AG04449 (cell line): ENCODE measurements at regions of chr15 and their contacts with region 1.

Region 1: DNA sequence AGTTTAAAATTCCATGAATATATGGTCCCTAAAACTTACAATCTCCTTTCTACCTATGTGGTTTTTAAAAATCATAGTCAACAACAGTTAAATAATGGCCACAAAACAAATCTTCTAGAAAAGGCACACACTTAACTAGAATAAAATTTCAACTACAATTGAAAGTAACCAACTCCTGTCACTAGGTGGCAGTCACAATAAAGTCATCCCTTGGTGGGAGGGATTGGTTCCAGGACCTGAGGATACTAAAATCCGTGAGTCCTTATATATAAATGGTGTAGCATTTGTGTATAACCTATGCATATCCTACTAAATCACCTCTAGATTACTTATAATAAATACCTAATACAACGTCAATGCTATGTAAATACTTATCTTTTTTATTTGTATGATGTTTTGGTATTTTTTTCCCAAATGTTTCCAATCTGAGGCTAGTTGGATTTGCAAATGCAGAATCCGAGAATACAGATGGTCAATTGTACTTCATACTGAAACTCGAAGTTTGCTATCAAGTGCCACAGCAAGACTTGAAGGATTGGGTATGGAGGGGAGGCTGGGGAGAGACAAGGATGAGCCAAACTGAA is 172.6 kb downstream of the FMN1 start:
- DNase-seq: no peak
- H3K4me3 ChIP-seq: no peak overlapping the region
- CTCF ChIP-seq: peak; percentile 58

Region 2: DNA sequence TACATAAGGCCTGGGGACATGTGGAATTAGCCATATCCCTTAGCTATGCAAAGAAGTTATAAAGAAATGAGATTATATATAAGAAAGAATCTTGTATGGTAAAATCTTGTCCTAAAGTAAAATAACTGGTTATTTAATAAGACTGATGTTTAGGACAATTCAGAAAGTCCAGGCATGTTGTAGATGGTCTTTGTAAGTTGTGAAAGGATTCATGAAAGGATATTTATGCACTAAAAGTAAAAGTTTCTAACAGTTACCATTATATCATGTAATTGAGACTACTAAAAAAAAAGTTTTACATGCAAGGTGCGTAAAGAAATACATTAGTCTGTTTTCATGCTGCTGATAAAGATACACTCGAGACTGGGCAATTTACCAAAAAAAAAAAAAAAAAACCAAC is 26.4 kb after region 1 on chr15:
- CTCF ChIA-PET with region 1: interaction called, 10 read pairs
- POLR2A ChIA-PET with region 1: no interaction called
- DNase-seq: no peak
- H3K4me3 ChIP-seq: no peak overlapping the region
- CTCF ChIP-seq: no peak